Dendritic cell treated with granulocyte-macrophage colony-stimulating factor and Interleukin-4, amounts not matched to agents 40 ng/mL and 50 ng/mL, for 4 days (primary cell): ENCODE measurements at regions of chr6 and their contacts with region 1.

Region 1: DNA sequence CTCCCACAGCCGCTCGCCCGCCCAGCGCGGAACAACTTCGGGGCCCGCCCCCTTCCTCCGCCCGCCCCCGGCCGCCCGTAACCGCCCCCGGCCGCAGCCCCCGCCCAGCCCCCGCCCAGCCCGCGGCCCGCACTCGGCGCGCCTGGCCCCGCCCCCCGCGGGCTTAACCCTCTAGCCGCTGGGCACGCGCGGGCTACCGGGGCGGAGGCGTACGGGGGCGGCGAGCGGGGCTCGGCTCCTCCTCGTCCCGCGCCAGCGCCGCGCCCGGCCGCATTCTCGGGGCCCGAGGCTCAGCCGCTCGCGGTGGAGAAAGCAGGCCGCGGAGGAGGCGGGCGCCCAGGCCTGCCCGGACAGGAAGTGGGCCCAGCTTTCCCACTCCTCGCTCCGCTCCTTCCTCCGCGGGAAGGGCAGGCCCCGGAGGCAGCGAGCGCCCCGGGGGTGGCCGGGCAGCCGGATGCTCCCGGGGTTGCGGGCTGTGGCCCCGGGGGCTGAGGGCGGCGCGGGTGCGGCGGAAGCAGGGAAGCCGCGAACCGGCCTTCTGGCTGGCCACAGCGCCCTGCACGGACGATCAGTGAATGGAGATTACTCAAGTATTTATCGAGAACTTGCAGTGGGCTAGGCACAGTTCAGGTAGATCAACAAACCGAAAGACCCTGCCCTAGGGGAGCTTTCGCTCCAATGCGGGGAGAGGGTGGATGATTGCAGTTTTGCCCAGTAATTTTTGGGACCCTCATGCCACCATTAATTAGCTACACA is at the start of gene TRAM2:
- H3K4me3 Mint-ChIP-seq: peak within 1 kb of the TSS; percentile 95
- H3K27ac Mint-ChIP-seq: peak within 1 kb of the TSS; percentile 71
- H3K4me1 Mint-ChIP-seq: peaks cover 51% of the 10 kb centered on the region
- H3K27me3 Mint-ChIP-seq: no peaks in the 10 kb centered on the region

Region 2: DNA sequence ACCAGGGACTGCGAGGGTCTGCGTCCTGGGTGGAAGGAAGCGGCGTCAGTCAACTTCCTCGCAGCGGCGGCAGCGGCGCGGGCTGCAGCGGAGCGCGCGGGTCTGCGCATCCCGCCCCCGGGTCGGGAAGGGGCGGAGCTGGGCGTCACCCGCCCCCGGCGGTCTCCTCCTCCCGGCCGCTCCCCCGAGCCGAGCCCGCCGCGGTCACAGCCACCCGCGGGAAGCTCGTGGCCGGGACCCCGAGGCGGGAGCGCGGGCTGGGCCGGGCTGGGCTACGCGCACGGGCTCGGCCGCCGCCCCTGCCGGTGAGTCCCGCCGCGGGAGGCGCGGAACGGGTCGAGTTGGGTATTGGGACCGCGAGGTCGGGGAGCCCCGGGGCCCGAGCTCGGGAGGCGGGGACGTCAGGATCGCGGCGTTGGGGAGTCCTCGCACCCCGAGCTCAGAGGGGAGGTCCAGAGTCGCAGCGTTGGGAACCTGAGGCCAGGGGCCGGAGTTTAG is 215.2 kb before region 1 on chr6 and contains the start of gene PAQR8:
- intact Hi-C with region 1: loop called (anchors 5 kb)
- H3K4me3 Mint-ChIP-seq: peak within 1 kb of the TSS; percentile 99
- H3K27ac Mint-ChIP-seq: peak within 1 kb of the TSS; percentile 83
- H3K4me1 Mint-ChIP-seq: peaks cover 27% of the 10 kb centered on the region
- H3K27me3 Mint-ChIP-seq: no peaks in the 10 kb centered on the region

Region 3: GRCh38 chr6:52491203-52492069 is 85.8 kb before region 1 on chr6:
- intact Hi-C with region 1: loop called (anchors 5 kb)
- H3K4me3 Mint-ChIP-seq: peak overlapping the region; percentile 54
- H3K27ac Mint-ChIP-seq: peak overlapping the region; percentile 88
- H3K4me1 Mint-ChIP-seq: peaks cover 53% of the 10 kb centered on the region
- H3K27me3 Mint-ChIP-seq: no peaks in the 10 kb centered on the region

Region 4: GRCh38 chr6:52640170-52640569 is 63.0 kb after region 1 on chr6:
- intact Hi-C with region 1: loop called (anchors 5 kb)
- H3K4me3 Mint-ChIP-seq: no peak overlapping the region
- H3K27ac Mint-ChIP-seq: peak overlapping the region; percentile 90
- H3K4me1 Mint-ChIP-seq: peaks cover 55% of the 10 kb centered on the region
- H3K27me3 Mint-ChIP-seq: peaks cover 1% of the 10 kb centered on the region

Region 5: DNA sequence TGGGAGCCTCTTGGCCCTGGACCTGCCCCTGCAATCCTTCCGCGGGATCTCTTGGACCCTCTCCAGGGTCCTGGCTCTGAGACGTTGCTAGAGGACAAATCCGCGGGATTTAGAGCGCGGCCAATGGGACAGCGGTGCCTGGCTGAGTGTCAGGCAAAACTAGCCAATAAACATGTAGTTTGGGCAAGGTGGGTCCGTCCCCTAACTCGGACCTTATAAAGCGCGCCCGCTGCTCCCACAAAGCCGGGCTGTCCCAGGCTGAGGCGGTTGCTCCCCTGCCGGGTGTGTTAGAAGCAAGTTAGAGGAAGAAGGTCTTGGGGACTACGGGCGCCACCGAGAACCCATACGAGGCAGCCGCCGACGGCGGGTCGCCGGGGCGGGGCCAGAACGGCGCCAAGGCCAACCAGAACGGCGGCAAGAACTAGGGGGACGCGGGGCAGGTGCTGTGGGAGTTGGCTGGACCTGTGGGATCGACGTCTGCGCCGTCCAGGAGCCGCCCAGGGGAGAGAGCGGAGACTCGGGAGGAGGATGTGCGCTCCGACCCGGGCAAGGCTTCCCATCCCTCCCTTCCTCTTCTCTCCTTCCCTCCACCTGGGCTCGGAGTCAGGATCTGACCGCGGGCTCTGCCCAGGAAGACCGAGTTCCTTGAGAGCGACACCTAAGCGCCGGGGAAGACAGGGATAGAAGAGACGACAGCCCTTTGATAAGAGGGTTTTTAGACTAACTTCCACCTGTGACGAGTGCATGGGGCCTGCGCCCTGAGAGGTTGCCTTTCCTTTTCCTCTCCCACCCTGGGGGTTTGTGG is 87.2 kb after region 1 on chr6:
- intact Hi-C with region 1: loop called (anchors 5 kb)
- H3K4me3 Mint-ChIP-seq: no peak overlapping the region
- H3K27ac Mint-ChIP-seq: no peak overlapping the region
- H3K4me1 Mint-ChIP-seq: no peaks in the 10 kb centered on the region
- H3K27me3 Mint-ChIP-seq: peaks cover 17% of the 10 kb centered on the region

Region 6: DNA sequence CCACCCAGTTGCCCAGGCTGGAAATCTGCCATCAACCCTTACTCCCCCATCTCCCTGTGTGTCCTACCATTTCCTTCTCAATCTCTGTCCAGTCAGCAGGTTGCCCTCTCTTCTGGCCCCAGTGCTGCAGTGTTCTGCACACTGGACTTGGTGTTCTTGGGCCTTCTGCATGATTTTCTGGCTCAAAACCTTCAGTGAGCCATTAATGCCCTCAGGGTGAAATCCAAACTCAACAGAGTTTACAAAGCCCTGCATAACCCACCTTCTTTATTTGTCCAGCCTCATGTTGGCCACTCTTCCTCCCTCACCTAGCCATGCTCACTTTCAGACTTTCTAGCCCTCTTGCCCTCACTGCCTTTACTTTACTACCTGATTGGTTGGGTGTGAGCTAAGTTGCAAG is 337.3 kb after region 1 on chr6:
- intact Hi-C with region 1: no loop called
- H3K4me3 Mint-ChIP-seq: no peak overlapping the region
- H3K27ac Mint-ChIP-seq: no peak overlapping the region
- H3K4me1 Mint-ChIP-seq: peaks cover 5% of the 10 kb centered on the region
- H3K27me3 Mint-ChIP-seq: peaks cover 3% of the 10 kb centered on the region